ENCODE measurements at regions of chr5 and their contacts with region 1.

Region 1: DNA sequence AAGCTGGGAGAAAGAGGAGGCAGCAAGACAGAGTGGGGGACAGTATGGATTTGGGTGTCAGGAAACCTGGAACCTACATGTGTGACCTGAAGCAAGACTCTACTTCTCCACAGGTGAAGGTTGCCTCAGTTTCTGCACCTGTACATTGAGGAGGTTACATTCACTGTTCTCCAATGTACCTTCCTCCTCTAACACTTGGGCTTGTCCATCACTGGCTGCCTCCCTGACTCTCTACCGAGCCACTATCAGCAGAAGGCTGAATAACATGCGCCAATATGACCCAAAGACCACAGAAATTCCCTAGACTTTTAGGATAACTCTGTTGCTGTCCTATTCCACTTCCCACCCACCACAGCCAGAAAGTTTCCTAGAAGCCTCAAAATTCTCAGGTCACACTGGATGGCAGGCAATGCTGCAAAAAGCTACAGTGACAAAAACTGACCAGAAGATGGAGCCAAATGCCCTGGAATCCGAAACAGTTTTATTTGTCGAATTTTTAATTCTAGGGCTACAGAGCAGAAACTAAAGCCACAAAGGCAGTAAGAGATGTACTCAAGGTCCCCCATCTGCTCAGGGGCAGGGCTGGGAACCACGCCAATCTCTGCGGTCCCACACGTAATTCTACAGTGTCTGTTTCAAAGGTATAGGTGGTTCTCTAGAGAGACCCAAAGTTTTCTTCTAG is 64.4 kb downstream of the FAM114A2 start:
- H3K4me3 Mint-ChIP-seq: no peak overlapping the region
- H3K27ac Mint-ChIP-seq: no peak overlapping the region
- H3K4me1 Mint-ChIP-seq: no peaks in the 10 kb centered on the region
- H3K27me3 Mint-ChIP-seq: no peaks in the 10 kb centered on the region

Region 2: DNA sequence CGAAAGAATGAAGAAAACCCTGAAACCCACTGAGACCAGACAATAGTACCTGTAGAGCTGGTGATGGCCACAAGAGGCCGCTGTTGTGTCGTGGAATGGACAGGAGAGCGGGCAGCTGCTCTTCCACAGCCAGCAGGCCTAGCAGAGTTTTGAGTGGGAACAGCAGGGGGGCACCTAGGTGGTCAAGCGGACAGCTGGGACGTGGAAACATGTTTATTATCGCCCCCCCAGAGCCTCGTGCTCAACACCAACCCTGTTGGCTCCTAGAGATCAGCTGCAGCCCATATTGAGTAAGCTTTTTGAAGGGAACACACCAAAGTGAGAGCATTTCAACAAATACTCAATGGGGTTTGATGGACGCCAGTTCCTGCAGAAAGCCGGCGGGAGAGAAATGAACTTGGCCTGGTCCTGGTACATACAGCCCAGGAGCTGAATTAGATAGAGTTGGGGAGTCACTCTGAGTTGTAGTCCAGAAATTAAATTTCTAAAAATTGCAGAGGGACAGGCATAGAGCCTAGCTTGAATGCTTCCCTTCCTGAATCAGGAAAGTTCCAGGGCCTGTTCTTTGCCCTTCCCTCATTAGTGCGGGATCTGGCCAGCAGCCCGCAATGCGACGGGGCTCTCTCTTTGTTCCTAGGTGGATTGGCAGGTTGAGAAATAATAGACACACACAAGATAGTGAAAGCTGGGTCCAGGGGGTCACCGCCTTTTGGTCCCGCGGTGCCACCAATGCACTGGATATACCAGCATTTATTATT is 98.3 kb after region 1 on chr5:
- intact Hi-C with region 1: loop called (anchors 2 kb)
- H3K4me3 Mint-ChIP-seq: no peak overlapping the region
- H3K27ac Mint-ChIP-seq: no peak overlapping the region
- H3K4me1 Mint-ChIP-seq: peaks cover 6% of the 10 kb centered on the region
- H3K27me3 Mint-ChIP-seq: peaks cover 6% of the 10 kb centered on the region

Region 3: DNA sequence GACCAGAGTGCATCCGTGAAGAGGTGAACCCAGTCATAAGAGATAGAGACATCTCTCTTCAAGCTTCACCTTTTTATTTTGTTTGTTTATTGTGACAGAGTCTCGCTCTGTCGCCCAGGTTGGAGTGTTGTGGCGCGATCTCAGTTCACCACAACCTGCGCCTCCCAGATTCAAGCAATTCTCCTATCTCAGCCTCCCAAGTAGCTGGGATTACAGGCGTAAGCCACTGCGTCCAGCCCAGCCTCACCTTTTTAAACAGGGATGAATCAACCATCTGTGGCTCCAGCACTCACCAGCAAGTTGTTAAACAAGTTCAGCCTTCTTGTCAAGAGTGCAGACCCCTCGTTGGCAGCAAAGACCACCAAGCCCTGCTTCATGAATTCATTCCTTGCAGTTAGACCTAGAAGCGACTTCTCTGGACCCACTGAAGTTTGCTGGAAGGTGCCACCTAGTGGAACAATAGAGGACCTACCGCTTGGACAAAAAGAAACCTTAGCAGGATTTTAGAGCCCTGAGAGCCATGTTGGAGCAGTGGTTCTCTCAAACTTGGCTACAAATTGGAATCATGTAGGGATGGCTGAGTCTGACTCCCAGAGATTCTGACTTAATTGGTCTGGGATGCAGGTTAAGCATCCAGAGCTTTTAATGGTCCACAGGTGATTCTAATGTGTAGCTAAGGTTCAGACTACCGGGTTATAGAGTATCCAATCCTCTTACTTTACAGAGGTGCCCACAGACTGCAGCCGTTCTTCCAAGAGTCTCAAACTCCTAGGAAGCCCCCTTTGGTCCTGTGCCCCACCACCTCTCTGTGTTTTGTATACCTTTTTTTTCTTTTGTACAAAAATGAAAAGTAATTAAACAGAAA is 205.8 kb after region 1 on chr5:
- intact Hi-C with region 1: loop called (anchors 1 kb)
- H3K4me3 Mint-ChIP-seq: no peak overlapping the region
- H3K27ac Mint-ChIP-seq: no peak overlapping the region
- H3K4me1 Mint-ChIP-seq: no peaks in the 10 kb centered on the region
- H3K27me3 Mint-ChIP-seq: peaks cover 18% of the 10 kb centered on the region

Region 4: GRCh38 chr5:154242964-154243376 is 268.7 kb after region 1 on chr5:
- intact Hi-C with region 1: no loop called
- H3K4me3 Mint-ChIP-seq: no peak overlapping the region
- H3K27ac Mint-ChIP-seq: no peak overlapping the region
- H3K4me1 Mint-ChIP-seq: peaks cover 7% of the 10 kb centered on the region
- H3K27me3 Mint-ChIP-seq: no peaks in the 10 kb centered on the region

Region 5: GRCh38 chr5:154405078-154405792 is 431.0 kb after region 1 on chr5:
- intact Hi-C with region 1: loop called (anchors 5 kb)
- H3K4me3 Mint-ChIP-seq: peak overlapping the region; percentile 64
- H3K27ac Mint-ChIP-seq: no peak overlapping the region
- H3K4me1 Mint-ChIP-seq: peaks cover 8% of the 10 kb centered on the region
- H3K27me3 Mint-ChIP-seq: peaks cover 5% of the 10 kb centered on the region

Region 6: GRCh38 chr5:154610321-154611154 is 636.3 kb after region 1 on chr5:
- intact Hi-C with region 1: loop called (anchors 10 kb)
- H3K4me3 Mint-ChIP-seq: peak overlapping the region; percentile 43
- H3K27ac Mint-ChIP-seq: no peak overlapping the region
- H3K4me1 Mint-ChIP-seq: peaks cover 12% of the 10 kb centered on the region
- H3K27me3 Mint-ChIP-seq: peaks cover 73% of the 10 kb centered on the region

Measured in dendritic cell treated with granulocyte-macrophage colony-stimulating factor and Interleukin-4, amounts not matched to agents 40 ng/mL and 50 ng/mL, for 4 days (primary cell).